ENCODE measurements at regions of chr13 and their contacts with region 1.

Region 1: GRCh38 chr13:46184277-46184699 is 2.3 kb upstream of the LCP1 start:
- DNase-seq: peak; percentile 92
- H3K4me3 Mint-ChIP-seq: peak overlapping the region; percentile 94
- H3K27ac Mint-ChIP-seq: peak overlapping the region; percentile 98
- H3K4me1 Mint-ChIP-seq: peaks cover 43% of the 10 kb centered on the region
- H3K27me3 Mint-ChIP-seq: peaks cover 1% of the 10 kb centered on the region

Region 2: DNA sequence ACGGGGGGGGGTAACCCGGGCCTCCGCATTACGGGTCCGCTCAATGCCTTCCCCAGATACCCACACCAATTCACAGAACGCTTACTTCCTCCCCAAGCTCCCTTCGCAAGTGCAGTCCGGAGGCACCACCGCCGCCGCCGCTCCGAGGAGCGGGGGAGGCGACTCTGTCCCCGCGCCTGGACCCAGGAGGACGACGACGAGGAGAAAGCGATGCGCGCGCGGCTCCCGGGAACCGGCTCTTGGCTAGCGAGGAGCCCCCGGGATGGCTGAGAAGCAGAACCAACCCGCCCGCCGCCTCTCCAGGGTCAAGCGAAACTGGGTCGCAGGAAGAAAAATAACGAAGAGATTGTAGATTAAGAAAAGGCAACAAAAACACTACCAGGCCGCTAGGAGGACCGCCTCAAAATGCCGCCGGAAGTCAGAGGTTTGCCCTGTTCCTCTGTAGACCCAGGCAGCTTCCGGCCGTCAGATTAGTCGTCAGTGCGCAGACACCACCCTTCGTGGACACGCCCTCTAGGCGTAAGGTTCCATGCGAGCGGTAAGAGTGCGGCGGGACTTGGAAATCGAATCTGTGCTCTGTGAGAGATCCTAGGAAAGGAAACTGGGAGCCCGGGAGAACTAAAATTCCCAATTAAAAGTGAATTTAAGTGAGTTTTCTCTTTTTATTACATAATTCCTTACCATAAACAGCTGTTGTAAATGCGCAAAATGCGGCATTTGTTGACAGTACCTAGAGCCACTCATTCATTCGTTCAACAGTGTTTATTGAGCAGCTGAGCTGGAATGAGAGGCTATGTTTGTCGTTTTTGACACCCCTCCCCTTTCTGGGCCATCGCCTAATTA is 131.7 kb before region 1 on chr13 and contains the start of gene ZC3H13:
- intact Hi-C with region 1: loop called (anchors 2 kb)
- DNase-seq: peak; percentile 98
- H3K4me3 Mint-ChIP-seq: peak within 1 kb of the TSS; percentile 94
- H3K27ac Mint-ChIP-seq: peak within 1 kb of the TSS; percentile 98
- H3K4me1 Mint-ChIP-seq: peaks cover 32% of the 10 kb centered on the region
- H3K27me3 Mint-ChIP-seq: peaks cover 20% of the 10 kb centered on the region
- total RNA-seq, gene ZC3H13: 56.1 and 58.8 TPM in 2 replicates

Region 3: GRCh38 chr13:46160471-46161066 is 23.7 kb before region 1 on chr13:
- intact Hi-C with region 1: loop called (anchors 1 kb)
- DNase-seq: peak; percentile 85
- H3K4me3 Mint-ChIP-seq: peak overlapping the region; percentile 76
- H3K27ac Mint-ChIP-seq: peak overlapping the region; percentile 83
- H3K4me1 Mint-ChIP-seq: peaks cover 48% of the 10 kb centered on the region
- H3K27me3 Mint-ChIP-seq: no peaks in the 10 kb centered on the region

Region 4: GRCh38 chr13:46173656-46174055 is 10.6 kb before region 1 on chr13:
- intact Hi-C with region 1: loop called (anchors 1 kb)
- DNase-seq: peak; percentile 82
- H3K4me3 Mint-ChIP-seq: peak overlapping the region; percentile 82
- H3K27ac Mint-ChIP-seq: peak overlapping the region; percentile 94
- H3K4me1 Mint-ChIP-seq: peaks cover 83% of the 10 kb centered on the region
- H3K27me3 Mint-ChIP-seq: no peaks in the 10 kb centered on the region

Region 5: DNA sequence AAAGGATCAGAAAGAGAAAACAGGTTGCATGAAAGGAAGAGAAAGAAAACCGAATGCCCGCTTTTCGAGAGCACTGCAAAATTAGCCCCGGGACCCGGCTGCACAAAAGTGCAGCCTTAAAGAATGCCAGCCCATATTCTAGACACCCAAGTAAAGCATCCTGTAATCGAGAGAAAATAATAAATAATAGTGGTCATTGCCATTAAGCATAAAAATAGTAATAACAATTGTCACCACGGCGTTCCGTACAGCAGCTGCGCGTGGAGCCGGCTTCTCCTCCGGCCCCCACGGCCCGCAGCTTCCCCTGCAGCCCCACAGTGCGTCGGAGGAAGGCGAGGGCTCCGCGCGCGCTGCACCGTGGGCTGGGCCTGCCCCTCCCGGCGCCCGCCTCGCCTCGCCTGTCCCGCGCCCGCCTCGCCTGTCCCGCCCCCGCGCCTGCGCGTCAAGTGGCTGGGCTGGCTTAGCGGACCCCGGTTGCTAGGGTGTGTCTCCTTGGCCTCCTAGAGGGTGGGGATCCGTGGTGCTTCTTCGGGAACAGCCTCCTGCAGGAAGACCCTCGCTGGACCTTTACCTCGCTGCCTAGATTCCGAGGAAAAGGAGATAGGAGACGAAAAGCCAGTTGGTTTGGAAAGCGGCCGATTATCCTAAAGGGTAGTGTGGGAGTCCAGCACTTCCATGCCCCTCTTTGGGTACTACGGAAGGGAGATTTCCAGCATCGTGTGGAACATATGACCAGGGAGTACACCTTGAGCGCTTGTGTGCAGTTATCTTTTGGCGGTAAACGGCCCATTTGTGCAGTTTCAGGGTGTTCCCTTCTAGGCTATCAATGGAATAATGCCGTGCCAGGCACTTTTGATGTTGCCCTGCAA is 27.4 kb after region 1 on chr13 and contains the start of gene LRRC63:
- intact Hi-C with region 1: loop called (anchors 1 kb)
- DNase-seq: peak; percentile 97
- H3K4me3 Mint-ChIP-seq: peak within 1 kb of the TSS; percentile 86
- H3K27ac Mint-ChIP-seq: peak within 1 kb of the TSS; percentile 92
- H3K4me1 Mint-ChIP-seq: peaks cover 25% of the 10 kb centered on the region
- H3K27me3 Mint-ChIP-seq: peaks cover 2% of the 10 kb centered on the region
- total RNA-seq, gene LRRC63: 0.26 and 0.40 TPM in 2 replicates

Region 6: GRCh38 chr13:46321494-46322225 is 137.4 kb after region 1 on chr13:
- intact Hi-C with region 1: loop called (anchors 2 kb)
- DNase-seq: peak; percentile 91
- H3K4me3 Mint-ChIP-seq: peak overlapping the region; percentile 88
- H3K27ac Mint-ChIP-seq: peak overlapping the region; percentile 93
- H3K4me1 Mint-ChIP-seq: peaks cover 24% of the 10 kb centered on the region
- H3K27me3 Mint-ChIP-seq: no peaks in the 10 kb centered on the region

Region 7: GRCh38 chr13:47025791-47026447 is 841.6 kb after region 1 on chr13:
- intact Hi-C with region 1: no loop called
- DNase-seq: no peak
- H3K4me3 Mint-ChIP-seq: no peak overlapping the region
- H3K27ac Mint-ChIP-seq: no peak overlapping the region
- H3K4me1 Mint-ChIP-seq: no peaks in the 10 kb centered on the region
- H3K27me3 Mint-ChIP-seq: peaks cover 3% of the 10 kb centered on the region

Measured in activated CD4-positive, alpha-beta T cell treated with anti-CD3 and anti-CD28 coated beads, Interleukin-2, amount 10 ng/mL, durations not matched to agents 24 days and 14 days (primary cell).